Head of caudate nucleus (tissue), 42 donors: ENCODE measurements at regions of chr5 and their contacts with region 1.

Region 1: DNA sequence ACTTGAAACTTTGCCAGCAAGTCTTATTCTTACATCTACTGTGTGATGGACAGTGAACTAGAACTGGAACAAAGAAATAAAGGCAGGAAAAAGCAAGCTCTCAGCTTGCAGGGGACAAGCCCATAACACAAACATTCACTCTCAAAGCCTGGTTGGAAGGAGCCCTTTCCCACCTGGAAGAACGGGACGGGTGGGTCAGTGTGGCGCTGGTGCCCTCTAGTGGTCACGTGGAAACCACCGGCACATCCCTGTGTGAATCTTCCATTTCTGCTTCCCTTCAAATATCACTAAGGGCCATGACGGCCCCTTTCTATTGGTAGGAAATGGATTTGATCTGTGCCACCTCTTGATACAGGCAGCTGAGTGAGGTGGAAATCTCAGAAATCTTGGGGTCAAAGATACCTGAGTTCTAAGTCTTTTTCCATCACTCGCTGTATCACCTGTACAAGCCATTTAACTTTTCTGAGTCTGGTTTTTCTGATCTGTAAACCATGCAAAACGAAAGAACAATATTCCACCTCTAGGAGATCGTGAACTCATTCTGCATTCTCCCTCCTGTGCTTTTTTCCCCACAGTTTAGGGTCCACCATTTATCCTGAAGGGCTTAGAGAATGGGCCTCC is 211.6 kb downstream of the MSX2 start:
- DNase-seq: peak; percentile 44 to 90 (median 79)

Region 2: DNA sequence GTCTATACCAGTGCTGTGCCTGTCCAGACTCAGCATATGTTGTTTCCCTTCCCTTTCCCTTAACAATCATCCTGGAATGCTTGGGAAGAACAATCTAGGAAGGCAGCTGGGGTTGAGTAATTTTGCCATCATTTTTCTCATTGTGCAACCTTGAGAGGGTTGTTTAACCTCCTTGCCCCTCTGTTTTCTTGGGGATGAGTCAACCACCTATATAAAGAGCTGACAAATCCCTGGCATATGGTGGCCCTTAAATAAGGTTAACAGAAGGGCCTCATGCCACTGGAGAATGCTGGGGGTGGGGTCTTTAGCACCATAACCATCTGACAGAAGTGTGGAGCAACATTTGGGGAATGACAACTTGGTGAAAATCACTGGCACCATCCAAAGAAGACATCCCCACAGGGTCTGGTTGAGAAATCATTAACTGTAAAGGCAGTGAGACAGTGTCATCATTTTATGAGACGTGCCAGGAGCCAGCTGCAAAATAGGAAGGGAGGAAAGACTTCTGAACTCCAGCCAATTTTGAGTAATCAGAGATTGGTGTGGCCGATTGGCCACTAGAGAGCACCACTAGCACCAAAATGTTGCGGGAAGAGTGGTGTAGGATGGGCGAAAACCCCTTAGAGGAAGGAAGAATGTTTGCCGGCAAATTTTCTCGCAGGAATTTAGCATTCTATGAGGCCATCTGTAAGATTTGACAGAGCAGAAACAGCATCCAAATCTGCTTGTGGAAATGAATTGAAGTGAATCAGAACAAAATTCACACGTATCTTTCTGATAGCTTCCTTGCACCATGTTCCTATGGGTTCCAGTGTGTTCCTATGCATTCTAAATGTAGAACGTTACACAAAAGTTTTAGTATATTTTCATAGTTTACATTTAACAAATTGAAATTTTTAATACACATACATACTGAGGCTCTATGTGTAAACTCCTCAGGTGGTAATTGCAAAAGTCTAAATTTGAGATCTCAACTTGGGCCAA is 97.8 kb before region 1 on chr5:
- intact Hi-C with region 1: loop called (anchors 10 kb)
- DNase-seq: peak in 36 of 42 donors; percentile 7 to 77 (median 51)

Region 3: DNA sequence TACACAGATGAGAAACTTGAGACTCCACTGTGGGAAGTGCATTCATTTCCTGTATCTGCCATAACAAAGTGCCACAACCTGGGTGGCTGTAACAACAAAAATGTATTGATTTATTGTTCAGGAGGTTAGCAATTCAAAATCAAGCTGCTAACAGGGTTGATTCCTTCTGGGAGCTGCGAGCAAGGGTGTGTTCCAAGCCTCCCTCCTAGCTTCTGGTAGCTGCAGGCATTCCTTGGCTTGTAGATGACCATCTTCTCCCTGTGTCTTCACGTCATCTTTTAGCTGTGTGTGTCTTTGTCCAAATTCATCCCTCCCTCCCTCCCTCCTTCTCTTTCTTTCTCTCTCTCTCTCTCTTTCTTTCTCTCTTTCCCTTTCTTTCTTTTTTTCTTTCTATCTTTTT is 46.5 kb after region 1 on chr5:
- intact Hi-C with region 1: no loop called
- DNase-seq: no peak

Region 4: GRCh38 chr5:175671013-175671412 is 735.0 kb after region 1 on chr5:
- intact Hi-C with region 1: no loop called
- DNase-seq: peak in 1 of 42 donors; percentile 12